ENCODE measurements at regions of chr17 and their contacts with region 1.

Region 1: GRCh38 chr17:79839363-79840268 is at the start of gene CBX4:
- DNase-seq: peak; percentile 98
- ATAC-seq: peak; percentile 84
- total RNA-seq, gene CBX4: 23.7 TPM

Region 2: DNA sequence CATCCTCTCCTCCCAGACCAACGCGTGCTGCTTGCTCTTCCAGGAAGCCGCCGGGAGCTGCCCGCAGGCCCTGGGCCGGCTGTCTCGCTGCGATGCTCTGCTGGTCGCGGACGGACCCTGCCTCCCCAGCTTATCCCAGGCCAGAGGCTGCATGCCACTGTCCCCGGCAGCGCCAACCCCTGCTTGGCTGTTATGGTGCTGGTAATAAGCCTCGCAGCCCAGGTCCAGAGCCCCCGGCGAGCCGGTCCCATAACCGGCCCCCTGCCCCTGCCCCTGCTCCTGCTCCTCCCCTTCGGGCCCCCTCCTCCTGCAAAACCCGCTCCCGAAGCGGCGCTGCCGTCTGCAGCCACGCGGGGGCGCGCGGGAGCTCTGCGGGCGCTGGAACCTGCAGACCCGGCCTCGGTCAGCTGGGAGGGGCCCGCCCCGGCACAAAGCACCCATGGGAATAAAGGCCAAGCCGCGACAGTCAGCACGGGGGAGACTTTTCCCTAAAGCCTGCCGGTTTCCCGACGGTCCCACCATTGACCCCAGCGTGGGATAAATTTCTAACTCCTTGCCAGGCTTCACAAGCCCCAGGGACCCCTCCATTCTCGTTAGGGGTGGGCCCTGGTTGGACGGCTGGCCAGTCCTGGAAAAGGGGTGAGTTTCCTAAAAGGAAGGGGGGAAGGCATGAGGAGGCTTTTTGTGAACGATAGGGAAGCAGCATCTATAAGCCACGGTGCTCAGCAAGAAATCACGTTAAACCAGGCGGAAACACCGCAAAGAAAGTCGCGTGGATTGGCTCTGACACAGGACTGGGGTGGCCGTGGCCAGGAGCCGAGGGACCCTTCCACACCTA is 97.6 kb before region 1 on chr17:
- intact Hi-C with region 1: loop called (anchors 10 kb)
- DNase-seq: peak; percentile 89
- ATAC-seq: peak; percentile 65

Region 3: DNA sequence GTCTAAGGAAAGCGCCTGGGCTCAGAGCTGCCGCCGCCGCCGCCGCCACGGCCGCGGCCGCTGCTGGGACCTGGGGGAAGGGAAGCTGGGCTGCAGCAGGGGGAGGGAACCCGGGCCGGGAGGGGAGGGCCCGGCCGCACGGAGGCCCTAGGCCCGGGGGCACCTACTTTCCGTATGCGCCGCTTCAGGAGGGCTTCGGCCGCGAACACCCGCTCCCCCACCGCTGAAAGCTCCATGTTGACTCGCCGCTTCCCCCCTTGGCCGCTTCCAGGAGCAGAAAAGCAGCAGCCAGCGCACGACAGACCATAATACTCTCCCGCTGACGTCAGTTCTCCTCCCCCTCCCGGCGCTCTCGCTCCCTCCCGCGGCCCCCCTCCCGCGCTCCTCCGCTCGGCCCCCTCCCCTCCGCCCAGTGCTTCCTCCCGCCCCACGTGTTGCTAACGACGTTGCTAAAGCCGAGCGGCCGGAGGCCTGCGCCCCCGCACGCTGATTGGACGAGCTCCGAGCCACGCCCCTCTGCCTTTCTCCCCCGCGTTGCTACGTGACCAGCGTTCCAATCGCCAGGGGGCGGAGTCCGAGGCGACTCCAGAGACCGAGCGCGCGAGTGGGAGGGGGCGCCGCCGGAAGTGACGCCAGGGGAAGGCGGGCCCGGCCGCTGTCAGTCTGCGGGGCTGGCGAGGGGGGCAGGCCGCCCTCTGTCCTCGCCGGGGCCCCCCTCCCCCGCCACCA is 42.7 kb before region 1 on chr17 and contains the start of gene CBX8:
- intact Hi-C with region 1: loop called (anchors 2 kb)
- DNase-seq: peak; percentile 100
- ATAC-seq: peak; percentile 98
- total RNA-seq, gene CBX8: 5.3 TPM

Region 4: GRCh38 chr17:79810130-79811010 is 29.2 kb before region 1 on chr17:
- intact Hi-C with region 1: loop called (anchors 2 kb)
- DNase-seq: peak; percentile 91
- ATAC-seq: peak; percentile 82

Region 5: GRCh38 chr17:79915850-79916430 is 76.3 kb after region 1 on chr17:
- intact Hi-C with region 1: loop called (anchors 5 kb)
- DNase-seq: no peak
- ATAC-seq: no peak

Region 6: DNA sequence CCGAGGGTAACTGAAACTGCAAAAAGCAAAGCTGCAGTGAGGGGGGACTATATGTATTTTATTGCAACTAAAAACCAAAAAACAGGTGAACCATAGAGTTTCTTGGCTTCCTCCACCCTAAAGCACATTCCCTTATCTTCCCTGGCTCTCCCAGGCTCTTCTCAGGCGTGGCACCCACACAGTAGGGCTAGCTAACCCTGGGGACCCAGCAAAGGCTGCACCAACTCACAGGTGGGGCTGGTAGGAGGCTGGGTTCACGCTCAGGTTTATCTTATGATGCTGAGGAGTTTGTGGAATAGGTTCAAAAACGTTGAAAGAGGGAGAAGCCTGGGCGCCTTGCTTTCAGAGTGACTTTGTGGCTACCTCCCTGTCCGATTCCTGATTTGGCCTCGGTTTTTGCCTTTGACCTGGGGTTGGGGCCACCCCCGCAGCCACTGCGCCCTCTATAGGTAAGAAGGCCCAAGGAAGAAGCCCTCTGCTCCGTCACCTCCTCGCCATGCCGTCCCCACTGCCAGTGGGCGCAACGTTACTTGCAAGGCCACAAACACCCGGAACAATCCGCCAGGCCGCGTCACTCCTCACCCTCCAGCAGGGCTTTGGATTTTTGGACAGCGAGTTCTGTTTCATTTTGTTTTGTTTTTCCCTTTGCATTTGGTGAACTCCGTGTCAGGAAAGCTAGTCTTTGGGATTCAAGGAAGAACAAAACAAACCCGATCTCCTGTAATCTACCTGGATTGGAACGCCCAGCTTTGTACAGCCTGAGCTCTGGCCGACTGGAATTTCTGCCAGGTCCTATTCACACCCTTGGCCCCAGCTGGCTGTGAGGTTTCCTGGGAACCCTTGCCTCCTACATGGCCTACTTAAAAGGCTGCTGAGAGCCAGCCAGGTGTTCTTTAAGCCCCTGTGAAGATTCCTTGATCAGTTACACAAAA is 135.2 kb after region 1 on chr17:
- intact Hi-C with region 1: no loop called
- DNase-seq: peak; percentile 48
- ATAC-seq: no peak

Region 7: GRCh38 chr17:79991140-79991923 is 151.7 kb after region 1 on chr17:
- intact Hi-C with region 1: loop called (anchors 2 kb)
- DNase-seq: peak; percentile 90
- ATAC-seq: peak; percentile 89

Region 8: GRCh38 chr17:80005360-80006338 is 166.0 kb after region 1 on chr17:
- intact Hi-C with region 1: no loop called
- DNase-seq: peak; percentile 72
- ATAC-seq: peak; percentile 45

Measured in Right ventricle myocardium inferior (tissue), 1 donor.